GM13977 (cell line): ENCODE measurements at regions of chr17 and their contacts with region 1.

Region 1: DNA sequence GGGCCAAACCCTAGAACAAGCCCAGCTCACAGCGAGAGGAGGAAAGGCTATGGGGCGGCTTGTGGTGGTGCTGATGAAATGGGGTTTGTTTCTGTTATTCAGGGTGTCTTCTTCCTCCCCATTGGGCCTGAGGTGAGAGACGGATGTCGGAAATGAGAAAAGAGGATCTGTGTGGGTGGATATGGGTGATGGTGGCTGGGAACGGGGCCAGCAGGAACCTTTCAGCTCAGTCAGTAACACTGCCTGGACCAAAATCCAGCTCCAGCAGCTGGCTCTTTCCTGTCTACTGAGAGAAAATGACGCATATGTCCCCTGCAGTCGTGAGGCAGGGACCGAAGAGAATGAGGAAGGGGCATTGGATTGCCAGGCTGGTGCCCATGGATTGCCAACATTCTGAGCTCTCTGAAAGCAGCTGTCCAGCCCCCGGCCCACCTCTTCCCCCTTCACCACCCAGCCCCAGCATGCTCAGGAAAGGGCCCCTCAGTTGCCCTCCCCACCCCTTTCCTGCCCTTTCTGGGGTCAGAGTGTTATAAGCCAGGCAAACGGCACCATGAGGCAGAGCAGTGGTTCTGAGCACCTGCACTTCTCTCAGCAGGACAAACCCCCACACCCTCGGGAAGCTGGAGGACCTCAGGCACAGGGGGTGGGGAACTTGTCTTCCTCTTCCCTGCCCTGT is 4.0 kb downstream of the MYH3 start:
- DNase-seq: peak; percentile 45
- CTCF ChIP-seq: no peak

Region 2: GRCh38 chr17:10403589-10403988 is 249.5 kb before region 1 on chr17:
- in situ Hi-C with region 1: no loop called
- DNase-seq: no peak
- CTCF ChIP-seq: no peak

Region 3: DNA sequence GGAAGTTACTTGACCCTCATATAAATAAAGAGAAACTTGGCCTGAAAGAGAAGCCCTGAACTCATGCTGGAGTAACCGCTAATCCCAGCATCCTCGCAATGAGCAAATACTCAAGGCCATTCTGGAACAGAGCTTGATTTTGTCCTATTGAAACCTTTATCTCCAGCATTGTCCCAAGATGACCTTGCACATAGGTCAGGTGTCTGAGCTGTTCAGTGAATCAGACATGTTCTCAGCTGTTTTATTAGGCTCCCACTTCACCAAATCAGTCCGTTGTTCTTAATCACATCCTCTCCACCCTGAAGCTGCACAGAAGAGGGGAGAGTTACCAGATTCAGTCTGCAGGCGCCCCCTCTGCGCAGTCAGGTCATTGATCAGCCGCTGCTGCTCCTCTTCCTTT is 125.7 kb before region 1 on chr17:
- in situ Hi-C with region 1: no loop called
- DNase-seq: no peak
- CTCF ChIP-seq: no peak

Region 4: GRCh38 chr17:10844621-10845387 is 191.7 kb after region 1 on chr17:
- in situ Hi-C with region 1: loop called (anchors 10 kb)
- DNase-seq: peak; percentile 84
- CTCF ChIP-seq: peak; percentile 92